PC-9 (cell line): ENCODE measurements at regions of chr5 and their contacts with region 1.

Region 1: DNA sequence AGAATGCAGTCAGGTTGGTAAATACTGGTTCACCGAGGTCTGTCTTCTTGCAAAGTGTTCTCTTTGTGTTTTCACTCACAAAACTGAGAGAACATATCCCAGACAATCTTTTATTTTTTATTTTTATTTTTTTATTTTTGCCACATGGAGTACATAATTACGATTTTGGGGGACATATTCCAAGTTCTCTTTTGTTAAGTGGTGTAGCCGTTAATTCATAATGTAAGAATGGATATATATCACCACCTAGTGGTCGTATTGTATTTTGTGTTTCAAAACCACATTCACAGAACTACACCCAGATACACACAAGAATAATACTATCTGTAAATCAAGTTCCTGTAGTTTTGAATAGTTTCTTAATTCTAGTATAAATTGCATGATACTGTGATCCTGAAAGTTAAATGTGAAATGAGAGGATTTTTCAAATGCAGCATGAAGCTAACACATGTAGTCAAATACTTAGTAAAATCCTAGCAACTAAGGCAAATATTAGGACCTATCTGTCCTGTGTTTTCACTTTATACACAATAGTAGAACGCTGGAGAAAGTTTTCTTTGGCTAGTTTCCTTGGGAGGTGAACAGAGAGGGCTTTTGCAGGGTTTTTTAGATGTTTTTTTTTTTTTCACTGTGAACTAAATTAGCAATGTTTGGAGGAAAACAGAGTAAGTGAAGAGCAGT is 92.7 kb downstream of the VCAN start:
- DNase-seq: peak in 1 of 2 experiments; percentile 35
- H3K4me3 ChIP-seq: no peak overlapping the region
- H3K27ac ChIP-seq: peak overlapping the region; percentile 49
- H3K4me1 ChIP-seq: peaks cover 16% of the 10 kb centered on the region
- H3K27me3 ChIP-seq: peaks cover 8% of the 10 kb centered on the region; the same call in 1 of the 2 replicates
- CTCF ChIP-seq: peak; percentile 82

Region 2: GRCh38 chr5:81922854-81923279 is 1641.3 kb before region 1 on chr5:
- CTCF ChIA-PET with region 1: no interaction called
- POLR2A ChIA-PET with region 1: interaction called, 11 read pairs
- intact Hi-C with region 1: no loop called
- DNase-seq: no peak
- H3K4me3 ChIP-seq: no peak overlapping the region
- H3K27ac ChIP-seq: no peak overlapping the region
- H3K4me1 ChIP-seq: no peaks in the 10 kb centered on the region
- H3K27me3 ChIP-seq: no peaks in the 10 kb centered on the region
- CTCF ChIP-seq: no peak

Region 3: DNA sequence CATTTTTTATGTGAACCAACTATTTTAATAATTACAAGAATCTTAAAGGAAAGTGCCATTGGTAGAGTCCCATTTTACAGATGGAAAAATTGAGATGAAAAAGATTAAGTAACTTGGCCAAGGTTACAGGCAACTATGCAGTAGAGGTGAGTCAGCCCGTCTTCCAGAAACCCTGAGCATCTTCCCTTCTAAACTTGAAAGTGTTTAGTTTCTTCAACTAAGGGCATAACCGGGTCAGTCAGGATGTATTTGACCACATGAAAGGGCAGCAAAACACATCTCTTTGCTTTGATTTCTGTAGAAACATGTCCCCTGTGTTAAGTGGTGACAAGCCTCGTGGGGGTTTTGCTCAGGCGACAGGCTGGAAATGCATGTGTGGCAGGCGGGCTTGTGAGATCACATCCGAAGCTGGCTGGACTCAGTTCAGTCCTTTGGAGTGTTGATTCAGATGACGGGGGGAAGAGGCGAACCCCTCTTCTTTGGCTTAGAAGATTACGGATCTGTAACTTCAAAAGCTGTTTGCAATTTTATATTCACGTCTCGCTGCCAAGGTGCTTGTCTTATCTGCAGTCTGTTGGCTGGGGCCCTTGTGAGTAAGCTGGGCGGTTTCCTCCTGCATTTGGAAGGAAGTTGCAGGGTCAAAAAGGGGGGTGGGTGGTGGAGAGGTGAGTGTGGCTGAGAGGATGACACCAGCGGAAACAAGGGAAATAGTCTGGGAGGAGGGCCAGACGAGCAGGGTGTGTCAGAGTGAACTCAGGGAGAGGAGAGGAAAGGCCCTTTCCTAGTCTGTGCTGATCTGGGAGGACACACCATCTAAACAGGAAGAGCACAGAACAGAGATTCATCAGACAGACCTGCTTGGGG is 1207.2 kb before region 1 on chr5:
- CTCF ChIA-PET with region 1: no interaction called
- POLR2A ChIA-PET with region 1: interaction called, 5 read pairs
- intact Hi-C with region 1: loop called (anchors 1 kb)
- DNase-seq: peak; percentile 79 to 82
- H3K4me3 ChIP-seq: peak overlapping the region; percentile 26; the same call in 1 of the 2 replicates
- H3K27ac ChIP-seq: peak overlapping the region; percentile 80
- H3K4me1 ChIP-seq: peaks cover 6% of the 10 kb centered on the region
- H3K27me3 ChIP-seq: no peaks in the 10 kb centered on the region
- CTCF ChIP-seq: no peak

Region 4: GRCh38 chr5:82885627-82886389 is 678.4 kb before region 1 on chr5:
- CTCF ChIA-PET with region 1: no interaction called
- POLR2A ChIA-PET with region 1: no interaction called
- intact Hi-C with region 1: no loop called
- DNase-seq: no peak
- H3K4me3 ChIP-seq: no peak overlapping the region
- H3K27ac ChIP-seq: no peak overlapping the region
- H3K4me1 ChIP-seq: no peaks in the 10 kb centered on the region
- H3K27me3 ChIP-seq: no peaks in the 10 kb centered on the region
- CTCF ChIP-seq: no peak

Region 5: DNA sequence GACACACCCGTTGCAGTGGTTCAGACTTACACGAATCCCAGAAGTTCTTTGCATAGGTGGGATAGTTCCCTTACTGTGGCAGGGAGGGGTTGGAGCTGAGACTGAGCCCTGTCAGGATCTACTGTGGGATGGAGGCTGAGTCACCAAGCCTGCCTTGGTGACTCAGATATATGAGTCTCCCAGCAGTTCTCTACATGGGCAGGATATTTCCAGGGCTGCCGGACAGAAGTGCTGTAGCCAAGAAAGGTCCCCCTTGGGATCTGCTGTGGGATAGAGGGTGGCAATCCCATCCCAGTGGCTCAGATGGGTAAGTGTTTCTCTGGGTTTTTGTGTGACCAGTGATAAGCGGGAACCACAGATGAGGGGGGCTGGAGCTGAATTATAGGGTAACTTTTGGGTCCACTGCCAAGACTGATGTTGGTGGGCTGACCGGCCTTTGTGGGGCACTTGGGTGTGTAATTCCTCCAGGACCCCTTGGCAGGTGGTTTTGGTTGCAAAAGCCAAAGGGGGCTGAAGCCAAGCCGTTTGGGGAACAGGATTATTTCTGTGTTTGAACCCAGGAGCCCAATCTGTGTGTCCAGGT is 468.2 kb before region 1 on chr5:
- CTCF ChIA-PET with region 1: no interaction called
- POLR2A ChIA-PET with region 1: no interaction called
- intact Hi-C with region 1: loop called (anchors 10 kb)
- DNase-seq: peak; percentile 42 to 58
- H3K4me3 ChIP-seq: no peak overlapping the region
- H3K27ac ChIP-seq: no peak overlapping the region
- H3K4me1 ChIP-seq: peaks cover 28% of the 10 kb centered on the region
- H3K27me3 ChIP-seq: no peaks in the 10 kb centered on the region
- CTCF ChIP-seq: no peak

Region 6: GRCh38 chr5:83577036-83577636 is 12.9 kb after region 1 on chr5:
- CTCF ChIA-PET with region 1: no interaction called
- POLR2A ChIA-PET with region 1: no interaction called
- intact Hi-C with region 1: loop called (anchors 1 kb)
- DNase-seq: peak; percentile 67 to 88
- H3K4me3 ChIP-seq: no peak overlapping the region
- H3K27ac ChIP-seq: peak overlapping the region; percentile 45
- H3K4me1 ChIP-seq: peaks cover 18% of the 10 kb centered on the region
- H3K27me3 ChIP-seq: no peaks in the 10 kb centered on the region
- CTCF ChIP-seq: no peak

Region 7: GRCh38 chr5:83672646-83673045 is 108.4 kb after region 1 on chr5:
- CTCF ChIA-PET with region 1: no interaction called
- POLR2A ChIA-PET with region 1: no interaction called
- intact Hi-C with region 1: no loop called
- DNase-seq: no peak
- H3K4me3 ChIP-seq: no peak overlapping the region
- H3K27ac ChIP-seq: no peak overlapping the region
- H3K4me1 ChIP-seq: no peaks in the 10 kb centered on the region
- H3K27me3 ChIP-seq: no peaks in the 10 kb centered on the region
- CTCF ChIP-seq: no peak

Region 8: DNA sequence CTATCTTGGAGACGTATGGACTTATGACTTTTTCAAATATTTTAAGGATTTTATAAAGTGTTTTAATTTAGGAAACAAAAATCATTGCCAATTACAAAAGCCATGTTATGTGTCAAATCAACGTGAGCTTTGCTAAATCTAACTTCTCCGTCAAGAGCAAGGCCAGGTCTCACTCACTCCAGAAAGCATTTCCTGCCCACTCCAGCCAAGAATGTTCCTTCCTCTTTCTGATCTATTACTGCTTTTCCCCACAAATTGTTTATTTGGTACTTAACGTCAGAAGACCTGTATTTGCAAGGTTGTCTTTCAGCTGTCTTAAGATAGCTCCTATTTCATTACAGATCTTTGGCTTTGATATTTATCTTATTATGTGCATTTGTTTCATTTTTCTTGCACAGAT is 350.0 kb after region 1 on chr5:
- CTCF ChIA-PET with region 1: no interaction called
- POLR2A ChIA-PET with region 1: no interaction called
- intact Hi-C with region 1: no loop called
- DNase-seq: no peak
- H3K4me3 ChIP-seq: no peak overlapping the region
- H3K27ac ChIP-seq: no peak overlapping the region
- H3K4me1 ChIP-seq: no peaks in the 10 kb centered on the region
- H3K27me3 ChIP-seq: no peaks in the 10 kb centered on the region
- CTCF ChIP-seq: no peak